Activated CD4-positive, alpha-beta memory T cell treated with anti-CD3 and anti-CD28 coated beads for 36 hours (primary cell): ENCODE measurements at regions of chr2 and their contacts with region 1.

Region 1: GRCh38 chr2:135985018-135985825 is at the start of gene DARS1:
- DNase-seq: peak; percentile 92
- H3K4me3 Mint-ChIP-seq: peak within 1 kb of the TSS; percentile 90
- H3K27ac Mint-ChIP-seq: peak within 1 kb of the TSS; percentile 97
- H3K4me1 Mint-ChIP-seq: peaks cover 48% of the 10 kb centered on the region
- H3K27me3 Mint-ChIP-seq: no peaks in the 10 kb centered on the region
- total RNA-seq, gene DARS1: 215 to 218 TPM

Region 2: DNA sequence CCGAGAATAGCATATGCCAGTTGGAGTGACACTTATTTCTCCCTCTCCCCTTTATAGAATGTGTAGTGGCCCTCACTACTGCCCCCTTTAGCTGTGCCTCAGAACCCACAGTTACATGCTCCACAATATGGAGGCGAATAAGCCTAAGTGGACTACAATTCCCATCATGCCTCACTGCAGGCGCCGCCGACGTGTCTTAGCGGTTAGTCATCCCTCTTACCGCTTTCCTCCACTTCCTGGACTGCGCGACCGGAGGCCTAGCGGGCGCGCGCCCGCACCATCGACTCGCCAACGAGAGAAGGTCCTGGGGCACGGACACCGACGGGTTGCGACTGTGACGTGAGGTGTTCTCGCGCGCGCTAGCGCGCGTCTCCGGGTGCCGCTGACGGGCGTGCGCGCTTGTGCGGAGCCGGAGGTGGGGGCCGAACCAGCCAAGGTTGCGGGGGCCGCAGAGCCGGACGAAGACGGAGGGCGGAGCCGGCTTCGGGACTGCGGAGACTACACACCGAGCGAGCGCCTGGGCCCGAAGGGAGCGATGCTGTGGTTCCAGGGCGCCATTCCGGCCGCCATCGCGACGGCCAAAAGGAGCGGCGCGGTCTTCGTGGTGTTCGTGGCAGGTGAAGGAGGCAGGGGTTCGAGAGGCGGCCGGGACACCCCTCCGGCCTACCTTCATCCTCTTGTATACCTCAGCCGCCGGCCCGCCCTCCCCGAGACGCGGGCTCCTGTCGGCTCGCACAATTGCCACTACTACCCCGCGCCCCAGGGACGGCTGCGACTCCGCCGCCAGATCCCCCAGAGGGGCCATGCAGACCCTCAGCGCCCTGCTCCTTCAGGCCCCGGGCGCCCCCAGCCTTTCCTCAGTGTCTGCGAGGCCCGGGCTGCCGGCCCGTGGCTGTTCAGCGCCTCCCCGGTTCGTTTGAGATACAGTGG is 243.6 kb before region 1 on chr2 and contains the start of gene UBXN4:
- CTCF ChIA-PET with region 1: no interaction called
- POLR2A ChIA-PET with region 1: no interaction called
- intact Hi-C with region 1: loop called (anchors 10 kb)
- DNase-seq: peak; percentile 98
- H3K4me3 Mint-ChIP-seq: peak within 1 kb of the TSS; percentile 96
- H3K27ac Mint-ChIP-seq: peak within 1 kb of the TSS; percentile 99
- H3K4me1 Mint-ChIP-seq: peaks cover 24% of the 10 kb centered on the region
- H3K27me3 Mint-ChIP-seq: no peaks in the 10 kb centered on the region
- total RNA-seq, gene UBXN4: 107 TPM

Region 3: GRCh38 chr2:135948642-135949355 is 36.4 kb before region 1 on chr2:
- CTCF ChIA-PET with region 1: interaction called, 6 read pairs
- POLR2A ChIA-PET with region 1: no interaction called
- intact Hi-C with region 1: loop called (anchors 2 kb)
- DNase-seq: peak; percentile 55
- H3K4me3 Mint-ChIP-seq: peak overlapping the region; percentile 53
- H3K27ac Mint-ChIP-seq: peak overlapping the region; percentile 87
- H3K4me1 Mint-ChIP-seq: peaks cover 64% of the 10 kb centered on the region
- H3K27me3 Mint-ChIP-seq: no peaks in the 10 kb centered on the region

Region 4: GRCh38 chr2:136008205-136008865 is 23.1 kb after region 1 on chr2:
- CTCF ChIA-PET with region 1: no interaction called
- POLR2A ChIA-PET with region 1: interaction called, 15 read pairs
- intact Hi-C with region 1: loop called (anchors 1 kb)
- DNase-seq: peak; percentile 87
- H3K4me3 Mint-ChIP-seq: no peak overlapping the region
- H3K27ac Mint-ChIP-seq: peak overlapping the region; percentile 72
- H3K4me1 Mint-ChIP-seq: peaks cover 49% of the 10 kb centered on the region
- H3K27me3 Mint-ChIP-seq: no peaks in the 10 kb centered on the region

Region 5: GRCh38 chr2:136117909-136118818 is 132.9 kb after region 1 on chr2 and contains the start of gene CXCR4:
- CTCF ChIA-PET with region 1: interaction called, 3 read pairs
- POLR2A ChIA-PET with region 1: interaction called, 5 read pairs
- intact Hi-C with region 1: loop called (anchors 1 kb)
- DNase-seq: peak; percentile 93
- H3K4me3 Mint-ChIP-seq: peak within 1 kb of the TSS; percentile 98
- H3K27ac Mint-ChIP-seq: peak within 1 kb of the TSS; percentile 98
- H3K4me1 Mint-ChIP-seq: peaks cover 54% of the 10 kb centered on the region
- H3K27me3 Mint-ChIP-seq: peaks cover 2% of the 10 kb centered on the region
- total RNA-seq, gene CXCR4: 139 to 141 TPM

Region 6: GRCh38 chr2:136225950-136226835 is 241.0 kb after region 1 on chr2:
- CTCF ChIA-PET with region 1: no interaction called
- POLR2A ChIA-PET with region 1: no interaction called
- intact Hi-C with region 1: no loop called
- DNase-seq: no peak
- H3K4me3 Mint-ChIP-seq: no peak overlapping the region
- H3K27ac Mint-ChIP-seq: no peak overlapping the region
- H3K4me1 Mint-ChIP-seq: peaks cover 13% of the 10 kb centered on the region
- H3K27me3 Mint-ChIP-seq: no peaks in the 10 kb centered on the region

Region 7: DNA sequence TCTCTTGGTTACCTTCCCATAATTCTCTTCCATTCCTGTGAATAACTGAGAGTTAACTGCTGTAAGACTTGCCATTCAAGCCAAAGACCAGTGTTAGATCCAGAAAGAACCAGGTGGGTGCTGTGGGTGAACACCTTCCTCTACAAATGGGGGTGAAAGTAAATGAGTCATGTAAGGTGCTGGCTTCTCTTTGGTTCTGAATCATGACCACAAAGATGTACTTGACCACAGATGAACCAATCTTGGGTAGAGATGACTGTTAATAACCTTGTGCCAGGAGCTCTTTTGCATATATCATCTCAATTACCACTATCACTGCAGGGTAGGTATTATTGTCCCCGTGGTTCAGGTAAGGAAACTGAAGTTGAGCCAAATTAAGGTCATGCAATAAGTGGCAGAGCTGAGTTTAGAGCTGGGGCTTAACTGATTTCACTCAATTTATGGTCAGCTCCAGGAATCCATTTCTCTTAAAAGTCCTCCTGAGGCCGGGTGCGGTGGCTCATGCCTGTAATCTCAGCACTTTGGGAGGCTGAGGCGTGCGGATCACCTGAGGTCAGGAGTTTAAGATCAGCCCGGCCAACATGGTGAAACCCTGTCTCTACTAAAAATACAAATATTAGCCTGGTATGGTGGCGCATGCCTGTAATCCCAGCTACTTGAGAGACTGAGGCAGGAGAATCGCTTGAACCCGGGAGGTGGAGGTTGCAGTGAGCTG is 377.6 kb after region 1 on chr2:
- CTCF ChIA-PET with region 1: no interaction called
- POLR2A ChIA-PET with region 1: no interaction called
- intact Hi-C with region 1: loop called (anchors 5 kb)
- DNase-seq: peak; percentile 67
- H3K4me3 Mint-ChIP-seq: peak overlapping the region; percentile 25
- H3K27ac Mint-ChIP-seq: peak overlapping the region; percentile 53
- H3K4me1 Mint-ChIP-seq: peaks cover 56% of the 10 kb centered on the region
- H3K27me3 Mint-ChIP-seq: peaks cover 5% of the 10 kb centered on the region